PC-3 (cell line): ENCODE measurements at regions of chr7 and their contacts with region 1.

Region 1: GRCh38 chr7:111004310-111004901 is 86.5 kb upstream of the LRRN3 start:
- DNase-seq: no peak
- ATAC-seq: no peak
- H3K4me3 ChIP-seq: no peak overlapping the region
- H3K27ac ChIP-seq: no peak overlapping the region
- H3K4me1 ChIP-seq: no peaks in the 10 kb centered on the region
- H3K27me3 ChIP-seq: no peaks in the 10 kb centered on the region
- CTCF ChIP-seq: no peak

Region 2: GRCh38 chr7:110929480-110930249 is 74.7 kb before region 1 on chr7:
- CTCF ChIA-PET with region 1: no interaction called
- POLR2A ChIA-PET with region 1: no interaction called
- intact Hi-C with region 1: loop called (anchors 5 kb)
- DNase-seq: no peak
- ATAC-seq: no peak
- H3K4me3 ChIP-seq: no peak overlapping the region
- H3K27ac ChIP-seq: no peak overlapping the region
- H3K4me1 ChIP-seq: no peaks in the 10 kb centered on the region
- H3K27me3 ChIP-seq: no peaks in the 10 kb centered on the region
- CTCF ChIP-seq: no peak